CD8-positive, alpha-beta T cell (primary cell): ENCODE measurements at regions of chr5 and their contacts with region 1.

Region 1: GRCh38 chr5:100903039-100903887 is at the start of gene ST8SIA4:
- DNase-seq: peak; percentile 81 to 96 (median 92)
- ATAC-seq: peak; percentile 72
- H3K4me3 ChIP-seq: peak within 1 kb of the TSS; percentile 72 to 92
- H3K4me3 Mint-ChIP-seq: peak within 1 kb of the TSS; percentile 88
- H3K27ac ChIP-seq: peak within 1 kb of the TSS; percentile 70 to 89
- H3K27ac Mint-ChIP-seq: peak within 1 kb of the TSS; percentile 97
- H3K4me1 ChIP-seq: peaks cover 19% of the 10 kb centered on the region
- H3K4me1 Mint-ChIP-seq: peaks cover 56% of the 10 kb centered on the region
- H3K27me3 ChIP-seq: no peaks in the 10 kb centered on the region
- H3K27me3 Mint-ChIP-seq: no peaks in the 10 kb centered on the region
- CTCF ChIP-seq: no peak
- total RNA-seq, gene ST8SIA4: 15.6 to 16.4 TPM

Region 2: GRCh38 chr5:100430268-100431195 is 472.7 kb before region 1 on chr5:
- CTCF ChIA-PET with region 1: interaction called, 3 read pairs
- POLR2A ChIA-PET with region 1: no interaction called
- intact Hi-C with region 1: loop called in 1 of 2 experiments (anchors 5 kb)
- DNase-seq: peak; percentile 2 to 58 (median 36)
- ATAC-seq: peak; percentile 46
- H3K4me3 ChIP-seq: no peak overlapping the region
- H3K4me3 Mint-ChIP-seq: no peak overlapping the region
- H3K27ac ChIP-seq: no peak overlapping the region
- H3K27ac Mint-ChIP-seq: no peak overlapping the region
- H3K4me1 ChIP-seq: no peaks in the 10 kb centered on the region
- H3K4me1 Mint-ChIP-seq: no peaks in the 10 kb centered on the region
- H3K27me3 ChIP-seq: no peaks in the 10 kb centered on the region
- H3K27me3 Mint-ChIP-seq: no peaks in the 10 kb centered on the region
- CTCF ChIP-seq: peak; percentile 84

Region 3: DNA sequence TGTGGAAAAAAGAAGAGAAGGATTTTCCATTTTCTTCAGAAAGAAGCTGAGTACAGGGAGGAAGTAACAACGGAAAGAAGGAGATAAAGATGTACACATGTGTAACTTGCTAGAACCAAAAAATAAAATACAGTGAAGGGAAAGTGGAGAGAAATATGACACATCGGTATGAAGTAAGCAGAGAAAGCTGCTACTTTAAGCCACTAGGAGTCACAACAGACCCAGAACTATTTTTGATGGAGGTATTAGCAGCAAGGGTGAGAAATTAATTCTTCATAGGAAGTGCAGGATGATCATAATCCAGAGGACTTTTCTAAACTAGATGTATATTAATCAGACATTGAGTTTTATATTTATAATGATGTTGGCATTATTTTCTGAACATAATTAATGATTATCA is 279.5 kb before region 1 on chr5:
- CTCF ChIA-PET with region 1: interaction called, 12 read pairs
- POLR2A ChIA-PET with region 1: interaction called, 3 read pairs
- intact Hi-C with region 1: no loop called
- DNase-seq: peak in 2 of 9 experiments; percentile 39 to 58
- ATAC-seq: peak; percentile 62
- H3K4me3 ChIP-seq: no peak overlapping the region
- H3K4me3 Mint-ChIP-seq: no peak overlapping the region
- H3K27ac ChIP-seq: no peak overlapping the region
- H3K27ac Mint-ChIP-seq: no peak overlapping the region
- H3K4me1 ChIP-seq: no peaks in the 10 kb centered on the region
- H3K4me1 Mint-ChIP-seq: no peaks in the 10 kb centered on the region
- H3K27me3 ChIP-seq: no peaks in the 10 kb centered on the region
- H3K27me3 Mint-ChIP-seq: peaks cover 2% of the 10 kb centered on the region
- CTCF ChIP-seq: peak; percentile 56

Region 4: DNA sequence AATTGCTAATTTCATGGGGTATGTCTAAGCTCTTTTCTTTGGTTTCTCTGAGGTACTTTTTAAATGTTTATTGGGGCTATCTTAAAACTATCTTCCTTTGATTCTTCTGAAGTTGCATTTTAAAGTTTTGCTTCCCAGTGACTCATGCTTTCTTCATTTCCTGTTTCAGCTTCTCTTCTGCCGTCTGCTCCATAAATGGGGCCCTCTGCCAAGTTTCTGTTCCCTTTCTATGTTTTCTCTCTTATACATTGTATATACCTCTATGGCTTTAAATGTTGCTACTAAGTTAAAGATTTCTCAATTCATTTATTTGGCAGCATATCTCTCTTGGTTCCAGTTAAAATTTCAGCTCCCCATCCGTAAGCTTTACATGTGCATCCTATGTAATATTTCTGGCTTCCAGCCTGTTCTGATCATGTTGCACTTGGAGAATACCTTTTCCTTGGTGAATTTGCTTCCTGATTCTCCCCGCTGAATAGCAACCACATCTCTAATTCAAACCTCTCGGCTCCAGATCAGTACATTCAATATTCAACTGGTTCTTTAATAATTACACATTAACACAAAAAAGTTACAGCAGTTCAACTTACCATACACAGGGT is 125.5 kb before region 1 on chr5:
- CTCF ChIA-PET with region 1: interaction called, 4 read pairs
- POLR2A ChIA-PET with region 1: interaction called, 10 read pairs
- intact Hi-C with region 1: loop called in 1 of 2 experiments (anchors 2 kb)
- DNase-seq: peak in 2 of 9 experiments; percentile 17 to 47
- ATAC-seq: peak; percentile 31
- H3K4me3 ChIP-seq: no peak overlapping the region
- H3K4me3 Mint-ChIP-seq: no peak overlapping the region
- H3K27ac ChIP-seq: no peak overlapping the region
- H3K27ac Mint-ChIP-seq: no peak overlapping the region
- H3K4me1 ChIP-seq: peaks cover 18% of the 10 kb centered on the region
- H3K4me1 Mint-ChIP-seq: peaks cover 27% of the 10 kb centered on the region
- H3K27me3 ChIP-seq: no peaks in the 10 kb centered on the region
- H3K27me3 Mint-ChIP-seq: no peaks in the 10 kb centered on the region
- CTCF ChIP-seq: no peak

Region 5: DNA sequence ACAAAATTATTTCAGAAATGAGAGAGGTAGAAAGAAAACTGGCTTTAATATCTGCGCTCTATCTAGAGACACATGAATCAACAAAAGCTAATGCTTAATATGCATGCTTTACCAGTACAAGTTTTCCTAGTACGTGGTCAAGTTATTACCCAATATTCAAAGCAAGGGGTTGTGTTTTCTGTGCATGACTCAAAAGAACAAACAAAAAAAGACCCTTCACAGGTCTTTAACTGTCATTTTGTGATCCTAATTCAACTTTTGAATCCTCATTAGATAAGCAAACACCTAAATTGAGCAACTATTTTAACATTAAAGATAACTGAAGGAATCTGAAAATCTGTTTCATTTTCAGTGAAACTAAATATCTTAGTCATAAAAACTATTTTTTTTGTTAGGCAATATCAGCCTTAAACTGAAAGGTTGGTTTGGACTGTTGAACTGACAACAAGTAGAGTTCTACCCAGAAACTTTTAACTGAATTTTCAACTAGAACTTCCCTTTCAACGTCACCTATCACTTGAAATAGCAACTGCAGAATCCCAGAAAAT is 12.7 kb before region 1 on chr5:
- CTCF ChIA-PET with region 1: interaction called, 9 read pairs
- POLR2A ChIA-PET with region 1: interaction called, 71 read pairs
- intact Hi-C with region 1: loop called in 1 of 2 experiments (anchors 1 kb)
- DNase-seq: peak in 1 of 9 experiments; percentile 33
- ATAC-seq: no peak
- H3K4me3 ChIP-seq: no peak overlapping the region
- H3K4me3 Mint-ChIP-seq: peak overlapping the region; percentile 76
- H3K27ac ChIP-seq: peak overlapping the region in 1 of 2 experiments; percentile 74
- H3K27ac Mint-ChIP-seq: peak overlapping the region; percentile 84
- H3K4me1 ChIP-seq: peaks cover 35% of the 10 kb centered on the region
- H3K4me1 Mint-ChIP-seq: peaks cover 69% of the 10 kb centered on the region
- H3K27me3 ChIP-seq: no peaks in the 10 kb centered on the region
- H3K27me3 Mint-ChIP-seq: no peaks in the 10 kb centered on the region
- CTCF ChIP-seq: no peak

Region 6: DNA sequence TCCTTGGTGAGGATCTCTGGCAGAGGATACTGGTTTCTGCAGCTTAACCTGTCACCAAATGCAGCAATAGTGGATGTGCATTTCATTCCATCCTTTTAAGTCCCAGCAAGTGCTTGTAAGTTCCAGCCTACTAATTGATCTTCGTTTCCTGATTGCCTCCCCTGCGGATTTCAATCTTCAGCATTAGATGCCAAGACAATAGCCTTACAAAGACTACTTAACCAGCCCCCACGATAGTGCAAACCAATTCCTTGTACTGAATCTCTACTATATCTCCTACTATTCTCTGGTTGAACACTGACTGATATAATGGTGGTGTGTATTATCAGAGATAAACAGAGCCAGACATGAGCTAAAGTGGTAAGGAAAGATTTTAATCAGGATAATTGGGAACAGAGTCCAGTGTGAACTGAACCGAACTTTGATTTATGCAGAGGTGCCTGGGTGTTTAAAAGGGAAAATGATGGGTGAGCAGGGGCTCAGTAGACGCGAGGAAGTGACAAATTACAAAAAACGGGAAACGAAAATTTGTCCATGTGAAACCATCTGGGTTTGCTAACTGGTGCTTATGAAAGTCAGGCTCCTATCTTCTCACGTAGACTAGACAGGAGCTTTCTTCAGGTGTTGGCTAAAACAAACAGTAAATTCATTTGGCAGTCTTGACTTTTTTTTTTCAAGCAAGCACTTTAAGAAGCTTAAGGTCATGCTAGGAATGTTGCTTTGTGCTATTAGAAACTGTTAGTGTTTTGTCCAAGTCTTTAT is 106.7 kb after region 1 on chr5:
- CTCF ChIA-PET with region 1: no interaction called
- POLR2A ChIA-PET with region 1: no interaction called
- intact Hi-C with region 1: loop called in 1 of 2 experiments (anchors 5 kb)
- DNase-seq: no peak
- ATAC-seq: no peak
- H3K4me3 ChIP-seq: no peak overlapping the region
- H3K4me3 Mint-ChIP-seq: no peak overlapping the region
- H3K27ac ChIP-seq: no peak overlapping the region
- H3K27ac Mint-ChIP-seq: no peak overlapping the region
- H3K4me1 ChIP-seq: no peaks in the 10 kb centered on the region
- H3K4me1 Mint-ChIP-seq: no peaks in the 10 kb centered on the region
- H3K27me3 ChIP-seq: no peaks in the 10 kb centered on the region
- H3K27me3 Mint-ChIP-seq: no peaks in the 10 kb centered on the region
- CTCF ChIP-seq: no peak